H1 (cell line): ENCODE measurements at regions of chr2 and their contacts with region 1.

Region 1: DNA sequence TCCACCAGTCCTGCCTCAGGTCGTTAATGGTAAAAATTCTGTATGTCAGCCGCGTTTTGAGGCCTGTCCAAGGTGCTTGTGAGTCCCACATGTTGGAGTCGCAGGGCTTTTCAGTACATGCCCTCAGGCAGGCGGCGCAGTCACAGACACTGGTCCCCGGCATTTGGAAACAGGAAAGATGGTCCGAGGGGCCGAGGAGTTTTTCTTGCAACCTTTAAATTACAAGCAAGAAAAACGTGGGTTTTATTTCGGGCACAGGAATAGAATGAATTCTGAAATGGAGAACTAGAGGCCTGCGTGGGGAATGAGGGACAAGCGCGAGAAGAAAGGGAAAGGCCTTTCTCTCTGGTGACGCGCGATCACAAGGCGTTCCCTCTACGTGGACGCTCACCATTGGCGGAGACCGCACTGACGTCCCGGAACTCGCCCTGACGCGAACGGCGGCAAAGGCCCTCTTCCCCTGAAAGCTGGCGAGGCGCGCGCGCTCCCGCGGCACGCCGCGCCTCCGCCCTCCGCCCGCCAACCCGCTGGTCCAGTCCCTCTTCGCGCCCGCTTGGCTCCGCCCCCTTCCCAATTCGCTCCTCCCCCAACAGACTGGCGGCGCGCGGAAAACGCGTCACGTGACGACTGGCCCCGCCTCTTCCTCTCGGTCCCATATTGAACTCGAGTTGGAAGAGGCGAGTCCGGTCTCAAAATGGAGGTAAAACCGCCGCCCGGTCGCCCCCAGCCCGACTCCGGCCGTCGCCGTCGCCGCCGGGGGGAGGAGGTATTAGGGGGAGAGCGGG is at the start of gene HNRNPA3:
- DNase-seq: peak; percentile 98 to 100
- H3K4me3 ChIP-seq: peak within 1 kb of the TSS; percentile 73 to 91 (median 79)
- H3K27ac ChIP-seq: peak within 1 kb of the TSS; percentile 99
- H3K4me1 ChIP-seq: peaks cover 2 to 5% (median 4%) of the 10 kb centered on the region in 4 experiments; a peak in 5 of 7 replicates
- H3K27me3 ChIP-seq: no peaks in the 10 kb centered on the region
- CTCF ChIP-seq: no peak
- EP300 ChIP-seq: no peak; a peak in 1 of 3 replicates
- POLR2A ChIP-seq: peak; percentile 70 to 97
- RAD21 ChIP-seq: no peak
- total RNA-seq, gene HNRNPA3: 390 and 408 TPM in 2 replicates

Region 2: GRCh38 chr2:177118636-177119035 is 93.7 kb before region 1 on chr2:
- CTCF ChIA-PET with region 1: no interaction called
- POLR2A ChIA-PET with region 1: no interaction called
- DNase-seq: peak in 1 of 2 experiments; percentile 19
- H3K4me3 ChIP-seq: no peak overlapping the region
- H3K27ac ChIP-seq: no peak overlapping the region
- H3K4me1 ChIP-seq: peaks cover 0 to 2% (median 0%) of the 10 kb centered on the region in 4 experiments; a peak in 1 of 7 replicates
- H3K27me3 ChIP-seq: no peaks in the 10 kb centered on the region
- CTCF ChIP-seq: no peak
- EP300 ChIP-seq: no peak
- POLR2A ChIP-seq: no peak
- RAD21 ChIP-seq: no peak

Region 3: DNA sequence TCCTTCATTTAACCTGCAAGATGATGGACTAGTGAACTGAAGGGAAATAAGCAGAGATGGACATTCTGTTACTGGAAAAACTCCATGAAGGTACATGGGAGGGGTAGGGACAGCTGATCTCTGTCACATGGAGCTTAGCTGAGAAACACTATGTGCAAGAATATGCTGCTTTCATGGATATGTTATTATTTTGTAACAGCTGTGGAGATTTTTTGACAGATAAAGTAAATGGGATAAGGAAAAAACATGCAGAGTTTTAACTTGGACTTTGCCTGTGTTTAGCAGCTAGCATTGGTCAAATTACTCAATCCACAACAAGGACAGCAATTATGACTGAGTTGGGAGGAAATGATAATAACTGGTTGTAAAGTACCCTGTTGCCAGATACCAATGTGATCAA is 28.4 kb before region 1 on chr2:
- CTCF ChIA-PET with region 1: no interaction called
- POLR2A ChIA-PET with region 1: interaction called, 13 read pairs
- DNase-seq: no peak
- H3K4me3 ChIP-seq: no peak overlapping the region
- H3K27ac ChIP-seq: no peak overlapping the region
- H3K4me1 ChIP-seq: peaks cover 0 to 6% (median 4%) of the 10 kb centered on the region in 4 experiments; a peak in 2 of 7 replicates
- H3K27me3 ChIP-seq: no peaks in the 10 kb centered on the region
- CTCF ChIP-seq: no peak
- EP300 ChIP-seq: no peak
- POLR2A ChIP-seq: no peak
- RAD21 ChIP-seq: no peak

Region 4: GRCh38 chr2:177229448-177230242 is 17.3 kb after region 1 on chr2:
- CTCF ChIA-PET with region 1: interaction called, 3 read pairs
- POLR2A ChIA-PET with region 1: interaction called, 128 read pairs
- DNase-seq: no peak
- H3K4me3 ChIP-seq: no peak overlapping the region
- H3K27ac ChIP-seq: no peak overlapping the region
- H3K4me1 ChIP-seq: no peaks in the 10 kb centered on the region
- H3K27me3 ChIP-seq: no peaks in the 10 kb centered on the region
- CTCF ChIP-seq: no peak
- EP300 ChIP-seq: no peak
- POLR2A ChIP-seq: no peak
- RAD21 ChIP-seq: no peak

Region 5: DNA sequence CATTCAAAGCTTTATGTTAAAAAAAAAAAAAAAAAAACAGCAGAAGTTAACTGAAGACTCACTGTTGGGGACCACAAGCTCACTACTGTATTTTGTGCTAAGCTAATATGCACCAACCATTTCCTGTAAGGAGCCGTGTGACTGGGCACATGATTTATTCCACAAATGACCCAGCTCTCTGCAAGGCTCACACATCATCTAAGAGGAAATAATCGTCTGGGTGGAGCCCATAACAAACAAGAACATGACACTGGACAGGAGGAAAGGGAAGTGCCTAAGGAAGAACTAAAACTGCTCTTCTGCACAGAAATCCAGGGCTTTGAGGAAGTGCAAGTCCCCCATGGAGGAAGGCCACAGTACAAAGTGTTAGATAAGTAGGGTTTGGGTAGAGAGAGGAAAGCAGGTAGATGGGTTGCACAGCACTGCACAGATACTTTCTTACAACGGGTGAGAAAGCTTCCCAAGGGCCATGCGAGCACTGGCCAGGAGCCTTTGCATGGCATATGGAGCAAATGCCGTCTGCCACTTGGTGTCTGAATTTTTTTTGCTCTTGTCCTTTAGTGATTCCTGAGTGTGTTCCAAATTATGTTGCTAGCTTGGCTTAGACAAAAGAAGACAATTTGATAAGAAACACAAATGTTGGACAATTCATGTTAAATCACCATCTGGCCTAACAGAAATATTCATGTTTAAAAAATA is 27.8 kb after region 1 on chr2:
- CTCF ChIA-PET with region 1: no interaction called
- POLR2A ChIA-PET with region 1: interaction called, 12 read pairs
- DNase-seq: no peak
- H3K4me3 ChIP-seq: no peak overlapping the region
- H3K27ac ChIP-seq: no peak overlapping the region
- H3K4me1 ChIP-seq: peaks cover 0 to 2% (median 0%) of the 10 kb centered on the region in 4 experiments; a peak in 3 of 7 replicates
- H3K27me3 ChIP-seq: no peaks in the 10 kb centered on the region
- CTCF ChIP-seq: no peak
- EP300 ChIP-seq: no peak
- POLR2A ChIP-seq: no peak
- RAD21 ChIP-seq: no peak

Region 6: DNA sequence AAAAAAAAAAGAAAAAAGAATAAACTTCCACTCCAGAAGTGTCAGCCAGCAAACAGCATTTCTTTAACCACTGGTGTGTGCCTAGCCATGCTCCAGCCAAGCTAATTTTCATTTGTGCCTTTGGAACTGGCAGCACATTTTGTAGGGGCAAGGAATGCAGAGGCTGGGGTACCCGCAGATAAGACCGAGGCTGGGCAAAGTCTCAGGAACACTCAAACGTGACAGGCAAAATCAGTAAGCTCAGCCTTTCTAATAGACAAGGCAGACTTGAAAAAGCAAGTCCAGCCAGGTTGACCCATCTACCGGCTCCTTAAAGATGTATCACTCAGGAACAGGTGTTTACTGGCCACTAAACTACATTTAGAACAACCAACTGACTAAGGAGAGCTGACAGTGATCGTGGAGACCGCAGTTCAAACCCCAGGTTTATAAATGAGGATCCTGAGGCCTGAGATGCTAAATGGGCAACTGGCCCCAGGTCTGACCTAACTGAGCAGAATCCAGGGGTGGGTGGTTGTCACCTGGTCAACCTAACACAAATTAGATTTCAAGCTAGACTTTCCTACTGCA is 35.5 kb after region 1 on chr2:
- CTCF ChIA-PET with region 1: no interaction called
- POLR2A ChIA-PET with region 1: interaction called, 14 read pairs
- DNase-seq: no peak
- H3K4me3 ChIP-seq: no peak overlapping the region
- H3K27ac ChIP-seq: no peak overlapping the region
- H3K4me1 ChIP-seq: peaks cover 2 to 9% (median 5%) of the 10 kb centered on the region in 4 experiments; a peak in 5 of 7 replicates
- H3K27me3 ChIP-seq: no peaks in the 10 kb centered on the region
- CTCF ChIP-seq: no peak
- EP300 ChIP-seq: no peak
- POLR2A ChIP-seq: no peak
- RAD21 ChIP-seq: no peak

Region 7: GRCh38 chr2:177254433-177255226 is 42.3 kb after region 1 on chr2:
- CTCF ChIA-PET with region 1: no interaction called
- POLR2A ChIA-PET with region 1: interaction called, 14 read pairs
- DNase-seq: peak; percentile 39 to 86
- H3K4me3 ChIP-seq: no peak overlapping the region
- H3K27ac ChIP-seq: no peak overlapping the region
- H3K4me1 ChIP-seq: peaks cover 0 to 7% (median 0%) of the 10 kb centered on the region in 4 experiments; a peak in 1 of 7 replicates
- H3K27me3 ChIP-seq: no peaks in the 10 kb centered on the region
- CTCF ChIP-seq: peak; percentile 66 to 92 (median 89)
- EP300 ChIP-seq: no peak
- POLR2A ChIP-seq: no peak
- RAD21 ChIP-seq: peak; percentile 52 to 73